ENCODE measurements at regions of chr5 and their contacts with region 1.

Region 1: DNA sequence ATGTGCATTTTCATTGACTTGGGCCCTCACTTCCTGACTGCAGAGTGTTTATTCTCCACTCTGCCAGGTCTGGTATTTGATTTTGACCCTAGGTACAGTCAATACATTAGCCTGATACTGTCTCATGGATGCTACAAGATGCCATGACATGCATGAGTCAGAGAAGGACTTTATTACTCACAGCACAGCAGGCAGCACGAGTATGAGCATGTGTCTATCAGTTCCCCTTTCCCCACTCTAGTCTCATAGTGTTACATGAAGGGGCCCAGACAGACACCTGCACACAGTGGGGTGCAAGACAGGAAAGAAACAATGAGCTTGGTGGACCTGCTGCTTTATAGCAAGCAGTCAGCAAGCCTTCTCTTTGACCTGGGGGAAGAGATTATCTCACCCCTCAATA is 19.6 kb downstream of the ITGA2 start:
- DNase-seq: no peak
- H3K4me3 Mint-ChIP-seq: no peak overlapping the region
- H3K27ac Mint-ChIP-seq: peak overlapping the region; percentile 62
- H3K4me1 Mint-ChIP-seq: peaks cover 66% of the 10 kb centered on the region
- H3K27me3 Mint-ChIP-seq: peaks cover 23% of the 10 kb centered on the region

Region 2: DNA sequence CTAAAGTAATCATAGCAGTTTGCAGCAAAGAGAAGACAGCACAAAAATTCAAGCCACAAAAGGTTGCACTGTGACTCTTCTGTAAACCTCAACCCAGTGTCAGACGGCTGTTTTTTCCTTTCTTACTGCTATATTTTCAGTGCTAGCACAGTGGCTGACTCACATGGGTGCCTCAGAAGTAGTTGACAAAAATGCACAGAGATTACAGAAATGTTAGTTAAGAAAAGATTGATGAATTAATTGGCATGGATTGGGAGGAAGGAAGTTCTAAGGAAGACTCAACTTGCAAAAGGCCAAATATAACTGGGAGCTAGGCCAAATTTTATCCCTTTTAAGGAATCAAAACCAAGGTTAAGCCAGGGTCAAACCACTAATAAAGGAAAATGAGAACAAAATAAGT is 264.8 kb before region 1 on chr5:
- intact Hi-C with region 1: loop called (anchors 5 kb)
- DNase-seq: peak; percentile 54
- H3K4me3 Mint-ChIP-seq: peak overlapping the region; percentile 3
- H3K27ac Mint-ChIP-seq: peak overlapping the region; percentile 51
- H3K4me1 Mint-ChIP-seq: peaks cover 59% of the 10 kb centered on the region
- H3K27me3 Mint-ChIP-seq: no peaks in the 10 kb centered on the region

Region 3: GRCh38 chr5:52811067-52811749 is 197.5 kb before region 1 on chr5:
- intact Hi-C with region 1: no loop called
- DNase-seq: no peak
- H3K4me3 Mint-ChIP-seq: no peak overlapping the region
- H3K27ac Mint-ChIP-seq: no peak overlapping the region
- H3K4me1 Mint-ChIP-seq: peaks cover 12% of the 10 kb centered on the region
- H3K27me3 Mint-ChIP-seq: peaks cover 2% of the 10 kb centered on the region

Region 4: DNA sequence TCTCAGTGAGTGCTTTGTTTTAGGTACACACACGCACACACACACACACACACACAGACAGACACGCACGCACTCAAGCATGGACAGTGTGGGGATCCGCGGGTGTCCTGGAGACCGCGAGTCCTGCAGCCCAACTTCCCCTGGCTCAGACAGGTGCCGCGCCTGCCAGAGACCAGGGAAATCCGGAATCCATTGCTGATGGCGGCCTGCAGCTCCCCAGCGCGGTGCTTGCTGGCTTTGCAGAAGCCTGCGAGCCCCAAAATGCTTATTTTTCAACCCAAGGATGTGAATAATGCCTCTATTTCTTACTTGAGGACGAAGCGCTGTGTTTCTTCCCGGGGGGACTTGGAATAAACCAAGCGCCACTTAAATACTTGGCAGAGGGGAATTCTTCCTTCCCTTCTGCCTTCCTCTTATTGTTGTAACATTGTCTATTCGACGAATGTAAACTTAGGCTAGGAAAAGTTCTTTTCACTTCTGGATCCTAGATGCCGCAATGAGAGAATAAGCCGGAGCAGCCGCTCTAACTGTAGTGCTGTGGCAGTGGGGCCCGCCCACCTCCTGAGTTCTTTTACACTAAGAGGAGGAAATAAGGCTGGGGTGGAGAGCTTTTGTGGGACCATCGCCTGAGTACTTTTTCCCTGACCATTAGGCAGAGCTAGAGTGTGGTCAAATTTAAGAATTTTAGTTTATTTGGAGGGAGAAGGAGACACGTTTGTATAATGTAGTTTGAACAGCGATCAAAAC is 18.8 kb before region 1 on chr5:
- intact Hi-C with region 1: loop called (anchors 1 kb)
- DNase-seq: peak; percentile 26
- H3K4me3 Mint-ChIP-seq: peak overlapping the region; percentile 75
- H3K27ac Mint-ChIP-seq: no peak overlapping the region
- H3K4me1 Mint-ChIP-seq: peaks cover 29% of the 10 kb centered on the region
- H3K27me3 Mint-ChIP-seq: peaks cover 40% of the 10 kb centered on the region

Region 5: GRCh38 chr5:53041071-53041692 is 32.4 kb after region 1 on chr5:
- intact Hi-C with region 1: loop called (anchors 1 kb)
- DNase-seq: peak; percentile 36
- H3K4me3 Mint-ChIP-seq: peak overlapping the region; percentile 15
- H3K27ac Mint-ChIP-seq: peak overlapping the region; percentile 24
- H3K4me1 Mint-ChIP-seq: peaks cover 73% of the 10 kb centered on the region
- H3K27me3 Mint-ChIP-seq: no peaks in the 10 kb centered on the region

Region 6: GRCh38 chr5:53089345-53089991 is 80.7 kb after region 1 on chr5:
- intact Hi-C with region 1: loop called (anchors 1 kb)
- DNase-seq: no peak
- H3K4me3 Mint-ChIP-seq: peak overlapping the region; percentile 59
- H3K27ac Mint-ChIP-seq: peak overlapping the region; percentile 65
- H3K4me1 Mint-ChIP-seq: peaks cover 51% of the 10 kb centered on the region
- H3K27me3 Mint-ChIP-seq: peaks cover 2% of the 10 kb centered on the region